Activated CD4-positive, alpha-beta T cell treated with anti-CD3 and anti-CD28 coated beads for 36 hours (primary cell): ENCODE measurements at regions of chr4 and their contacts with region 1.

Region 1: GRCh38 chr4:173494013-173494970 is 35.7 kb downstream of the HAND2 start:
- DNase-seq: peak; percentile 79
- ATAC-seq: peak; percentile 97
- H3K4me3 Mint-ChIP-seq: peak overlapping the region; percentile 69
- H3K27ac Mint-ChIP-seq: peak overlapping the region; percentile 17
- H3K4me1 Mint-ChIP-seq: peaks cover 10% of the 10 kb centered on the region
- H3K27me3 Mint-ChIP-seq: peaks cover 33% of the 10 kb centered on the region

Region 2: DNA sequence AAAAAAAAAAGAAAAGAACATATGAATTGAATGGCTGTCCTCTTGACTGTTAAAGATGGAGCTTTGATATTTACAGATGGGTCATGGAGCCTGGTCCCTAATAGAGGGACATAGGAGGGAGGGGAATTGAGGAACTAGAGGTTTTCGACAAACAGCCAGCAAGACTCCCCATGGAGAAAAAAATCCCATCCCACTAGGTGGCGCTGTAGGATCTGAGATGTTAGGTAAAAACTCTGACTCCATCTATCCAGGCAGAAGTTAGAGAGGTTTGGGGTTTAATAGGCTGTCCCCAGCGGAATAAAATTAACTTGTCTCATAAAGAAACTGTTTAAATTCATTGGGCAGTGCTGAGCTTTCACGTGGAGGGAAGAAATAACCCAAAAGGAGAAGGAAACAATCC is 206.0 kb before region 1 on chr4:
- CTCF ChIA-PET with region 1: no interaction called
- POLR2A ChIA-PET with region 1: interaction called, 3 read pairs
- intact Hi-C with region 1: loop called in 1 of 2 experiments (anchors 1 kb)
- DNase-seq: peak; percentile 86
- ATAC-seq: peak; percentile 46
- H3K4me3 Mint-ChIP-seq: no peak overlapping the region
- H3K27ac Mint-ChIP-seq: peak overlapping the region; percentile 62
- H3K4me1 Mint-ChIP-seq: peaks cover 16% of the 10 kb centered on the region
- H3K27me3 Mint-ChIP-seq: no peaks in the 10 kb centered on the region

Region 3: GRCh38 chr4:173318648-173319211 is 175.6 kb before region 1 on chr4:
- CTCF ChIA-PET with region 1: interaction called, 3 read pairs
- POLR2A ChIA-PET with region 1: no interaction called
- intact Hi-C with region 1: loop called in 1 of 2 experiments (anchors 2 kb)
- DNase-seq: no peak
- ATAC-seq: peak; percentile 88
- H3K4me3 Mint-ChIP-seq: no peak overlapping the region
- H3K27ac Mint-ChIP-seq: no peak overlapping the region
- H3K4me1 Mint-ChIP-seq: peaks cover 11% of the 10 kb centered on the region
- H3K27me3 Mint-ChIP-seq: no peaks in the 10 kb centered on the region